ENCODE measurements at regions of chr10 and their contacts with region 1.

Region 1: GRCh38 chr10:28241741-28242399 is 61.0 kb downstream of the MPP7 start:
- DNase-seq: peak; percentile 65
- H3K4me3 ChIP-seq: no peak overlapping the region
- H3K27ac ChIP-seq: no peak overlapping the region
- H3K4me1 ChIP-seq: no peaks in the 10 kb centered on the region
- H3K27me3 ChIP-seq: peaks cover 10 to 16% of the 10 kb centered on the region in 2 experiments
- CTCF ChIP-seq: peak; percentile 71 to 78
- POLR2A ChIP-seq: no peak

Region 2: DNA sequence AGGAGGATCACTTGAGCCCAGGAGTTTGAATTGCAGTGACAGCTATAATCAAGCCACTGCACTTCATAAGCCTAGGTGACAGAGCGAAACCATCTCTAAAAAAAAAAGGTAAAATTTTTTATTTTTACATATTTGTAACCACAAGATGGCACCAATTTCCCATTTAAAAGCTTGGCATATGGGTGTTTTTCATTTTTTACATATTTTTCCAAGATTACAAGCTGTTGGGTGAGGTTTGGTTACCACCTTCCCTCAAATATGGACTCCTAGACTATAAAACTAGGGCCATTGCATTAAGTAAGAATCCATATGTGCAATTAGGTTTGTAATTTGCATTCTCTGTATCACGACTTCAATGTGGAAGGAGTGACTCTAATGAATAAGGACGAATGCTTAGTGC is 872.0 kb before region 1 on chr10:
- CTCF ChIA-PET with region 1: interaction called, 28 read pairs
- POLR2A ChIA-PET with region 1: no interaction called
- dilution Hi-C with region 1: no loop called
- intact Hi-C with region 1: loop called (anchors 2 kb)
- DNase-seq: peak; percentile 16
- H3K4me3 ChIP-seq: no peak overlapping the region
- H3K27ac ChIP-seq: no peak overlapping the region
- H3K4me1 ChIP-seq: no peaks in the 10 kb centered on the region
- H3K27me3 ChIP-seq: peaks cover 0 to 3% of the 10 kb centered on the region in 2 experiments
- CTCF ChIP-seq: no peak
- POLR2A ChIP-seq: no peak

Region 3: DNA sequence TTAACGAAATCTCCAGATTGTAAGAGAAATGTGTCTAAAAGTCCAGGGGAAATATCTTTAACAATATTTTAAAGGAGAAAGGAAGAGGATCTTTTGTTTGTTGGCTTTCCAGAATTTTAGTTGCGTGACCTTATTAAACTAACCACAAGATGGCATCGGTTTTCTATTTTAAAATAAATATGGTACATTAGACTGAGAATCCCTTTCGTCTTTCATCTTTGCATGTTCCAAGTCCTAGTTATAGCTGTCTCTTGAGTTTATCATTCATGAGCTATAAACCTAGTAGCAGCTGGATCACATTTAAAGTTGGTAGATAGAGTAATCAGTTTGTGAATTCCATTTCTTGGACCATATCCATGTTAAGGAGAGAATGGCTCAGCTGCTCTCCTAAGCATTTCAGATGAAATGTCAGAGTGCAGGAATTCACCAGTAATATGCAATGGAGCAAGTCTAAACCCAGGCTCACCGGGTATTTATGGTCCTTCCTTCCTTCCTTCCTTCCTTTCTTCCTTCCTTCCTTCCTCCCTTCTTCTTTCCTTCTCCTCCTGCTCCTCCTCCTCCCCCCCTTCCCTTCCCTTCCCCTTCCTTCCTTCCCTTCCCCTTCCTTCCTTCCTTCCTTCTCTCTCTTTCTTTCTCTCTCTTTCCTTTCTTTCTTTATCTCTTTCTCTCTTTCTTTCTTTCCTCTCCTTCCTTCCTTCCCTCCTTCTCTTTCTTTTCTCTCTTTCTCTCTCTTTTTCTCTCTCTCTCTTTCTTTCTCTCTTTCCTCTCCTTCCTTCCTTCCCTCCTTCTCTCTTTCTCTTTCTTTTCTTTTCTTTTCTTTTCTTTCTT is 795.6 kb before region 1 on chr10:
- CTCF ChIA-PET with region 1: interaction called, 20 read pairs
- POLR2A ChIA-PET with region 1: no interaction called
- dilution Hi-C with region 1: no loop called
- intact Hi-C with region 1: loop called (anchors 2 kb)
- DNase-seq: peak; percentile 51
- H3K4me3 ChIP-seq: no peak overlapping the region
- H3K27ac ChIP-seq: no peak overlapping the region
- H3K4me1 ChIP-seq: no peaks in the 10 kb centered on the region
- H3K27me3 ChIP-seq: no peaks in the 10 kb centered on the region
- CTCF ChIP-seq: peak; percentile 11 to 13
- POLR2A ChIP-seq: no peak

Region 4: DNA sequence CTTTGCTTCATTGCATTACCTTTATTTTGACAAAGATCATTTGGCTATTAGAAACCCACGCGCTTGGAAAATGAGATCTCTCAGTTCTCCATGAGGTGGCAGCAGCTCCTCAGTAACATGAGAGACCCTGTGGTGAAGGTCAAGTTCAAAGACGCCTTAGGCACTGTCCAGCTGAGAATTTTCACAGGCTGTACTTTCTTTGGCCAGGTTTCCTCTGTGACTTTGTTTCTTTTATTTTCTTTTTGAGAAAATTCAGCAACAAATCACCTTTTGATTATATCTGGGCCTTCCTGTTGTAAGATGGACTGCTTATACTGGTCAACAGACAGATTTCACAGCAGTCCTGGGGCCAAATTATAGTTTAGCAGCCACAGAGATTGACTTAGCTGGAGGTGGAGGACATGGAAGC is 683.3 kb before region 1 on chr10:
- CTCF ChIA-PET with region 1: interaction called, 25 read pairs
- POLR2A ChIA-PET with region 1: no interaction called
- dilution Hi-C with region 1: no loop called
- intact Hi-C with region 1: loop called (anchors 1 kb)
- DNase-seq: peak; percentile 48
- H3K4me3 ChIP-seq: no peak overlapping the region
- H3K27ac ChIP-seq: no peak overlapping the region
- H3K4me1 ChIP-seq: no peaks in the 10 kb centered on the region
- H3K27me3 ChIP-seq: no peaks in the 10 kb centered on the region
- CTCF ChIP-seq: peak; percentile 50 to 53
- POLR2A ChIP-seq: no peak

Region 5: GRCh38 chr10:27661514-27662286 is 580.2 kb before region 1 on chr10:
- CTCF ChIA-PET with region 1: interaction called, 11 read pairs
- POLR2A ChIA-PET with region 1: no interaction called
- dilution Hi-C with region 1: no loop called
- intact Hi-C with region 1: loop called (anchors 5 kb)
- DNase-seq: no peak
- H3K4me3 ChIP-seq: no peak overlapping the region
- H3K27ac ChIP-seq: no peak overlapping the region
- H3K4me1 ChIP-seq: no peaks in the 10 kb centered on the region
- H3K27me3 ChIP-seq: peaks cover 0 to 8% of the 10 kb centered on the region in 2 experiments
- CTCF ChIP-seq: no peak
- POLR2A ChIP-seq: no peak

Region 6: GRCh38 chr10:27759483-27760272 is 482.2 kb before region 1 on chr10:
- CTCF ChIA-PET with region 1: interaction called, 28 read pairs
- POLR2A ChIA-PET with region 1: no interaction called
- dilution Hi-C with region 1: no loop called
- intact Hi-C with region 1: loop called (anchors 5 kb)
- DNase-seq: no peak
- H3K4me3 ChIP-seq: no peak overlapping the region
- H3K27ac ChIP-seq: no peak overlapping the region
- H3K4me1 ChIP-seq: no peaks in the 10 kb centered on the region
- H3K27me3 ChIP-seq: peaks cover 7 to 19% of the 10 kb centered on the region in 2 experiments
- CTCF ChIP-seq: no peak
- POLR2A ChIP-seq: no peak

Region 7: DNA sequence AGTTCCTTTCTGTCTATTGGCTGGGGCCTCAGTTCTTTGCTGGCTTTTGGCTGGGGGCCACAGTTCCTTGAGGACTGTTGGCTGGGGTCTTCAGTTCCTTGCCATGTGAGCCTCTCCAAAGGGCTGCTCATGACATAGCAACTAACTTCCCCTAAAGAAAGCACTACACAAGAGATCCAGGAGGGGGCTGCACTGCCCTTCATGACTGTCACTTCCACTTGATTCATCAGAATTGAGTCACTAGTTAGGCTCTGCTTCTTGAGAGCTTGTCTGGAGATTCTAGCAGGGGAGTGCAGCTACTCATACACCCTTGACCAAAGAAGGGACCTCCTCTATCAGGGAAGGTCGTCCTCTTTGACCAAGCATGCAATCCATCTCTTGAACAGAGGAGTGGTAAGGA is 458.2 kb before region 1 on chr10:
- CTCF ChIA-PET with region 1: interaction called, 112 read pairs
- POLR2A ChIA-PET with region 1: no interaction called
- dilution Hi-C with region 1: no loop called
- intact Hi-C with region 1: loop called (anchors 1 kb)
- DNase-seq: peak; percentile 64
- H3K4me3 ChIP-seq: no peak overlapping the region
- H3K27ac ChIP-seq: no peak overlapping the region
- H3K4me1 ChIP-seq: no peaks in the 10 kb centered on the region
- H3K27me3 ChIP-seq: peaks cover 3 to 5% of the 10 kb centered on the region in 2 experiments
- CTCF ChIP-seq: peak; percentile 54 to 68
- POLR2A ChIP-seq: no peak

Region 8: GRCh38 chr10:28147706-28148105 is 94.2 kb before region 1 on chr10:
- CTCF ChIA-PET with region 1: no interaction called
- POLR2A ChIA-PET with region 1: no interaction called
- dilution Hi-C with region 1: no loop called
- intact Hi-C with region 1: no loop called
- DNase-seq: no peak
- H3K4me3 ChIP-seq: no peak overlapping the region
- H3K27ac ChIP-seq: no peak overlapping the region
- H3K4me1 ChIP-seq: no peaks in the 10 kb centered on the region
- H3K27me3 ChIP-seq: no peaks in the 10 kb centered on the region
- CTCF ChIP-seq: no peak
- POLR2A ChIP-seq: no peak